T-cell (primary cell): ENCODE measurements at regions of chr13 and their contacts with region 1.

Region 1: DNA sequence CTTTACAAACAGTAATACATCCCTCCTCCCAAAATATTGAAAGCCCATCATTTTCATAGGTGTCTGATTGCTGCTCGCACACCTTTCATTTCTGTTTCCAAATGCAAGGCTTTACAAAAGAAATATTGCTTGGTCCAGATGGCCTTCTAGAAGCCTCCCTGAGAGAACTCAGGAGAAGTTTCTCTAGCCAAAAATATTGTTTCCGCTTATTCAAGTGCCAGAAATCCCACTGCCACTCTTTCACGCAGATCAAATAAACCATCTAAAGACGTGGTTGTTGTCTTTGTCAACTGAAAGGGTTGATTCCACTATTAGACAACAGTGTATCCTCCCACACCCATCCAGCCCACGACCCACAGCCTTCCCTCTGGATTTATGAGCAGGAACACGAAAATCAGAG is 96.2 kb downstream of the ZIC5 start:
- DNase-seq: no peak
- ATAC-seq: no peak
- H3K4me3 ChIP-seq: no peak overlapping the region
- H3K4me3 Mint-ChIP-seq: no peak overlapping the region
- H3K27ac ChIP-seq: no peak overlapping the region
- H3K27ac Mint-ChIP-seq: no peak overlapping the region
- H3K4me1 ChIP-seq: no peaks in the 10 kb centered on the region
- H3K4me1 Mint-ChIP-seq: no peaks in the 10 kb centered on the region
- H3K27me3 ChIP-seq: peaks cover 0 to under 1% of the 10 kb centered on the region in 2 experiments
- H3K27me3 Mint-ChIP-seq: peaks cover 0 to 6% of the 10 kb centered on the region in 2 donors

Region 2: GRCh38 chr13:100069278-100069677 is 193.9 kb after region 1 on chr13:
- CTCF ChIA-PET with region 1: no interaction called
- POLR2A ChIA-PET with region 1: interaction called in 1 of 2 experiments, 13 read pairs
- DNase-seq: no peak
- ATAC-seq: no peak
- H3K4me3 ChIP-seq: no peak overlapping the region
- H3K4me3 Mint-ChIP-seq: no peak overlapping the region
- H3K27ac ChIP-seq: no peak overlapping the region
- H3K27ac Mint-ChIP-seq: no peak overlapping the region
- H3K4me1 ChIP-seq: no peaks in the 10 kb centered on the region
- H3K4me1 Mint-ChIP-seq: no peaks in the 10 kb centered on the region
- H3K27me3 ChIP-seq: peaks cover 0 to 10% of the 10 kb centered on the region in 2 experiments
- H3K27me3 Mint-ChIP-seq: peaks cover 12 to 14% of the 10 kb centered on the region in 2 donors

Region 3: GRCh38 chr13:100088644-100089464 is 213.5 kb after region 1 on chr13 and contains the start of gene PCCA:
- CTCF ChIA-PET with region 1: no interaction called
- POLR2A ChIA-PET with region 1: interaction called in 1 of 2 experiments, 15 read pairs
- DNase-seq: peak; percentile 15 to 77 (median 57)
- ATAC-seq: peak; percentile 79 to 85 (median 83)
- H3K4me3 ChIP-seq: peak within 1 kb of the TSS; percentile 82 to 84
- H3K4me3 Mint-ChIP-seq: peak within 1 kb of the TSS; percentile 93 to 96 (median 94)
- H3K27ac ChIP-seq: no peak within 1 kb of the TSS
- H3K27ac Mint-ChIP-seq: peak within 1 kb of the TSS; percentile 65 to 82
- H3K4me1 ChIP-seq: peaks cover 8 to 17% of the 10 kb centered on the region in 2 experiments
- H3K4me1 Mint-ChIP-seq: peaks cover 25 to 46% (median 27%) of the 10 kb centered on the region in 3 donors
- H3K27me3 ChIP-seq: no peaks in the 10 kb centered on the region
- H3K27me3 Mint-ChIP-seq: no peaks in the 10 kb centered on the region
- total RNA-seq, gene PCCA: 7.6 to 16.8 (median 10.2) TPM